K562 (cell line): ENCODE measurements at regions of chrX and their contacts with region 1.

Region 1: DNA sequence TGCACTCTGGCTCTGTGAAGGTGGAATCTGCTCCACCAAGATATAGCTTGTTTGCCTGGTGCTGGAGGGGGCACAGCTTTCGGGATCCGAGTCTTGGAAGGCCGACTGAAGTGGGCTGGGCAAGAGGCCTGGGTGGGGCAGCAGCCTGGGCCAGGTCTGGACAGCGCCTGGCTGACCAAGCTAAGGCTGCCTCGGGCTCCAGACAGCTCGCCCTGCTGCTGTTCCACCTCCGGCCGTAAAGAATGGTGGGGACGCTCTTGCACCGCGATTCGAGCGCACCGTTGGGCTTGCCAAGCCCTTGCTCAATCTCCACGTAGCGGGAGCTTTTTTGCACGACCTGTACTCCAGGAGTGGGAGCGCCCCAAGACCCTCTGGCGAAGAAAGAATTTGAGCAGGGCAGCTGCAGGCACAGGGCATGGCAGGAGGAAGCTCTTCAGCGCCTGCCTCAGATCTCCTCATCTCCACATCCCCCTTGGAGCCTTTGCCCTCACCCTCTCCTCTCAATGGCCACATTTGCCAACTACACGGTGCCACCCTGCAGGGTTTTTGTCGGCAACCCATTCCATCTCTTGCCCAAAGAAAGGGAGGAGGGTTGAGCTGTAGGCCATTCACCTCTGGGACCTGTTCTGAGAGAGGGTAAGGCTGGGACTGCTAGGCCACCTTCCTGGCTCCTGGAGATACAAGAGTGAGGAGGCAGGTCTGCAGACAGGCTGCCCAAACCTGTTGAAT is 18.9 kb downstream of the CNGA2 start:
- DNase-seq: peak; percentile 64 to 69 (median 66)
- ATAC-seq: peak; percentile 96
- H3K4me3 ChIP-seq: no peak overlapping the region
- H3K27ac ChIP-seq: no peak overlapping the region
- H3K4me1 ChIP-seq: peaks cover 0 to 6% of the 10 kb centered on the region in 2 experiments; a peak in 2 of 5 replicates
- H3K27me3 ChIP-seq: no peaks in the 10 kb centered on the region; a peak in 1 of 5 replicates
- CTCF ChIP-seq: peak; percentile 86 to 88 (median 86)
- EP300 ChIP-seq: no peak
- POLR2A ChIP-seq: no peak
- RAD21 ChIP-seq: peak; percentile 88 to 89

Region 2: DNA sequence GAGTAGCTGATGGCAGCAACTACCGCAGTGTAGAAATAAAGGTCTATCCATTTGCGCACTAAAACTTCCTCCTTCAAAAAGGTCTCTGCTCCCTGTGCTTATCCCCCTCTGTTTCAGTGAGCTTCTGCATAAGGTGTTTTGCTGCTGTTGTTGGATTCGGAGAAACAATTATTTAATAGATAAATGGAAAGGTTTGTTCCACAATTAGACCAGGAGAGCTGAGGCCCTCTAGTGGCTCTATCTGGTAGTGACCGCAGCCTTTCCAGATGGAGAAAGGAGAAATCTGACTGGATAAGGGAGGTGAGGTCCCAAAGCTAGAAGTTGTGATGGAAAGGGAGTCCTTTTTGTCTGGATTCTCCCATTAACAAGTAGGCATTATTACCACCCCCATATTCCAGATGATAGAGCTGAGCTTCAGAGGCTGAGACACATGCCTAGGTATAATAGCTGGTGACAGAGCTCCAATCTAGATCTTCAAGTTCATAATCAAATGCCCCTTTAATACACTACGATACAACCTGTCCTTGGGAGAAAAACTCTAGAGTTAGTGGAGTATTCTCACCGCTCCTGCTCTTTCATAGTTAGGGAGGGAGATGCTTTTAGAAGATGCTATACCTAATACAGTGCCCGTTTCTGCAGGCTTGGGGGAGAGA is 879.1 kb after region 1 on chrX:
- CTCF ChIA-PET with region 1: interaction called, 9 read pairs
- POLR2A ChIA-PET with region 1: no interaction called
- in situ Hi-C with region 1: no loop called
- intact Hi-C with region 1: loop called (anchors 1 kb)
- DNase-seq: peak; percentile 25 to 60 (median 45)
- ATAC-seq: 0 out of 3 replicates have a peak, but pooled peaks have one; percentile 50
- H3K4me3 ChIP-seq: no peak overlapping the region
- H3K27ac ChIP-seq: no peak overlapping the region
- H3K4me1 ChIP-seq: peaks cover under 1 to 8% of the 10 kb centered on the region in 2 experiments; a peak in 4 of 5 replicates
- H3K27me3 ChIP-seq: no peaks in the 10 kb centered on the region
- CTCF ChIP-seq: peak; percentile 61 to 75 (median 72)
- EP300 ChIP-seq: no peak
- POLR2A ChIP-seq: no peak
- RAD21 ChIP-seq: peak; percentile 67 to 74

Region 3: DNA sequence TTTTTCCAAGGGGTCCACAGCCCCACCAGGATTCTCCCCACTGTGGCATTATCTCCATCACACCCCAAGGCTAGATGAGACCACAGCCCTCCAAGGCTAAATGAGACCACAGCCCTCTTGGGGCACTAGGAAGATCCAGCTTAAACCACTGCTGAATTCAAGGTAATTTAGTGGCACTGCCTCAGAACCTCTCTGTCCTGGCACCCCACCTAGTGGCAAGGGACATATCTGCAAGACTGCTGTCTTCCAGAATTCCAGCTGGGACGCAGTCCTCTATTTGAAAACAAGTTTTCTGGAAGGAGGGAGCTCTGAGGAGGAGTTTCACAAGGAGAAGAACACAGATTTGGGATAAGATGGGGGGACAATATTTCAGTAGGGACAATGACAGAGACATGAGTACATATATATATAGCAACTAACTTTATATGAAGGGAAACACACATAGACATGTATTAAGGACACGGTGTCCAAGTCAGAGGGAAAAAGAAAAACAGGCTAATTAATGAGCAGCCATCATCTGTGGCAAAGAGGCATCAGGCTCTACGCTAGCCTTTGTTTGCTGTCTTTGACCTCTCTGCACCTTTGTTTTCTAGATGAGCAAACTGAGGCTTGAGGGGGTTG is 1067.8 kb after region 1 on chrX:
- CTCF ChIA-PET with region 1: interaction called, 3 read pairs
- POLR2A ChIA-PET with region 1: no interaction called
- in situ Hi-C with region 1: loop called (anchors 5 kb)
- intact Hi-C with region 1: loop called (anchors 2 kb)
- DNase-seq: peak; percentile 45 to 57 (median 52)
- ATAC-seq: peak; percentile 68
- H3K4me3 ChIP-seq: no peak overlapping the region
- H3K27ac ChIP-seq: no peak overlapping the region
- H3K4me1 ChIP-seq: peaks cover 0 to 8% of the 10 kb centered on the region in 2 experiments; a peak in 2 of 5 replicates
- H3K27me3 ChIP-seq: peaks cover 3 to 13% of the 10 kb centered on the region in 2 experiments; a peak in 4 of 5 replicates
- CTCF ChIP-seq: peak; percentile 76 to 80 (median 77)
- EP300 ChIP-seq: no peak
- POLR2A ChIP-seq: no peak
- RAD21 ChIP-seq: peak; percentile 52 to 66